Dendritic cell treated with granulocyte-macrophage colony-stimulating factor and Interleukin-4, amounts not matched to agents 40 ng/mL and 50 ng/mL, for 4 days (primary cell): ENCODE measurements at regions of chr18 and their contacts with region 1.

Region 1: GRCh38 chr18:35029770-35030169 is 11.4 kb upstream of the MAPRE2 start:
- H3K4me3 Mint-ChIP-seq: peak overlapping the region; percentile 69
- H3K27ac Mint-ChIP-seq: peak overlapping the region; percentile 83
- H3K4me1 Mint-ChIP-seq: peaks cover 17% of the 10 kb centered on the region
- H3K27me3 Mint-ChIP-seq: no peaks in the 10 kb centered on the region

Region 2: GRCh38 chr18:33983126-33983525 is 1046.6 kb before region 1 on chr18:
- intact Hi-C with region 1: no loop called
- H3K4me3 Mint-ChIP-seq: no peak overlapping the region
- H3K27ac Mint-ChIP-seq: no peak overlapping the region
- H3K4me1 Mint-ChIP-seq: no peaks in the 10 kb centered on the region
- H3K27me3 Mint-ChIP-seq: no peaks in the 10 kb centered on the region

Region 3: GRCh38 chr18:35143622-35144596 is 114.1 kb after region 1 on chr18:
- intact Hi-C with region 1: loop called (anchors 5 kb)
- H3K4me3 Mint-ChIP-seq: no peak overlapping the region
- H3K27ac Mint-ChIP-seq: no peak overlapping the region
- H3K4me1 Mint-ChIP-seq: peaks cover 10% of the 10 kb centered on the region
- H3K27me3 Mint-ChIP-seq: no peaks in the 10 kb centered on the region